ENCODE measurements at regions of chr3 and their contacts with region 1.

Region 1: GRCh38 chr3:123365450-123366143 is 83.3 kb downstream of the ADCY5 start:
- DNase-seq: no peak
- ATAC-seq: peak; percentile 83
- H3K4me3 ChIP-seq: no peak overlapping the region
- H3K27ac ChIP-seq: no peak overlapping the region
- H3K4me1 ChIP-seq: no peaks in the 10 kb centered on the region
- H3K27me3 ChIP-seq: peaks cover 13% of the 10 kb centered on the region
- CTCF ChIP-seq: peak; percentile 75

Region 2: DNA sequence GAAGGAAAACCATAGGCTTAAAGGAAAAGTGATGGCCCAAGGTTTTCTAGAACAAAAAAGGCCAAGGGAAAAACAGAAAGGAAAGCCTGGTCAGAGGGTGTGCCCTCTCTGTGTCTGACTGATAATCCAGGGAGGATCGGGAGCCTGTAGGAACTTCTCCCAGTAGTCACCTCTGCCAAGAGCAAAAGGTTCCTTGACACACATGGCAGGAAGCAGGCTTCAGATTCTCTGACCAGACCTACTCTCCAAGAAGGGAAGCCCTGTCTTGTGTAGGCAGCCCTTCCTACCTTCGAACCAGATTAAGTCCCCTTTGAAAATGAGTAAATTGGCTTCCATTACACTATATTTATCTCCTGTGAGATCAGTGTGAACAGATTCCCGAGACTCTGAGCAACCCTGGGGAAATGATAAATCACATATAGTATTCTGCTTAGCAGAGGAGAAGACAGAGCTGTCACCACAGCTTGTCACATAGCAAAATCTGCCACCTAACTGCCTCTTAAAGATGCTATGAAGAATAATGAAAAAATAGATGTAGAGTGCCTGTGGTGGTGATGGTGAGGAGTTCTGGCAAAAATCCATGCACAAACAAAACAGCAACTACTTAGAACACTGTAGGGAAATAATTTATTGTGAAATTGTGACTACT is 646.2 kb before region 1 on chr3:
- CTCF ChIA-PET with region 1: no interaction called
- POLR2A ChIA-PET with region 1: no interaction called
- in situ Hi-C with region 1: no loop called
- intact Hi-C with region 1: no loop called
- DNase-seq: no peak
- ATAC-seq: no peak
- H3K4me3 ChIP-seq: no peak overlapping the region
- H3K27ac ChIP-seq: no peak overlapping the region
- H3K4me1 ChIP-seq: no peaks in the 10 kb centered on the region
- H3K27me3 ChIP-seq: no peaks in the 10 kb centered on the region
- CTCF ChIP-seq: no peak

Region 3: GRCh38 chr3:123113889-123114450 is 251.6 kb before region 1 on chr3:
- CTCF ChIA-PET with region 1: no interaction called
- POLR2A ChIA-PET with region 1: no interaction called
- in situ Hi-C with region 1: no loop called
- intact Hi-C with region 1: no loop called
- DNase-seq: no peak
- ATAC-seq: no peak
- H3K4me3 ChIP-seq: no peak overlapping the region
- H3K27ac ChIP-seq: no peak overlapping the region
- H3K4me1 ChIP-seq: no peaks in the 10 kb centered on the region
- H3K27me3 ChIP-seq: no peaks in the 10 kb centered on the region
- CTCF ChIP-seq: no peak

Region 4: GRCh38 chr3:123350916-123351900 is 14.4 kb before region 1 on chr3:
- CTCF ChIA-PET with region 1: interaction called, 10 read pairs
- POLR2A ChIA-PET with region 1: no interaction called
- in situ Hi-C with region 1: no loop called
- intact Hi-C with region 1: no loop called
- DNase-seq: no peak
- ATAC-seq: no peak
- H3K4me3 ChIP-seq: no peak overlapping the region
- H3K27ac ChIP-seq: no peak overlapping the region
- H3K4me1 ChIP-seq: no peaks in the 10 kb centered on the region
- H3K27me3 ChIP-seq: peaks cover 2% of the 10 kb centered on the region; the same call in 1 of the 2 replicates
- CTCF ChIP-seq: no peak